Breast epithelium (tissue), 4 donors: ENCODE measurements at regions of chr13 and their contacts with region 1.

Region 1: GRCh38 chr13:23988546-23989122 is 91.3 kb upstream of the C1QTNF9B start:
- DNase-seq: no peak
- H3K4me3 ChIP-seq: no peak overlapping the region
- H3K27ac ChIP-seq: no peak overlapping the region
- H3K4me1 ChIP-seq: peaks cover 0 to 3% of the 10 kb centered on the region in 2 donors
- H3K27me3 ChIP-seq: no peaks in the 10 kb centered on the region
- CTCF ChIP-seq: no peak
- POLR2A ChIP-seq: no peak

Region 2: DNA sequence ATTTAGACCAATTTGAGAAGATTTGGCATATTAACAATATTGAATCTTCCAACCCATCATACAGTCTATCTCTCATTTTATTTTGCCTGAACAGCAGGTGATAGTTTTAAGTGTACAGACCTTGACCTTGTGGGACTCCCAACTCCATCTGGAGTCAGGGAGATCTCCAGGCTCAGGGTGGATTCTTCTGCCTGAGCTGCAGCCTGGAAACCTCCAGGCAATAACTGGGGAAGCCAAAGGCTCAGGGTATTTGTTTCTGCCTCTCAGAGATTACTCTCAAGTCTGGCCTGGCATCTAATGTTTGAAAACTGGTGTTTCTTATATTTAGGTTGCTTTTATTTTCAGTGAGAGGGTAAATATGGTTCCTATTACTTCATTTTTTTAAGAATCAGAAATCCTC is 10.8 kb after region 1 on chr13:
- intact Hi-C with region 1: loop called (anchors 1 kb)
- DNase-seq: no peak
- H3K4me3 ChIP-seq: no peak overlapping the region
- H3K27ac ChIP-seq: no peak overlapping the region
- H3K4me1 ChIP-seq: no peaks in the 10 kb centered on the region
- H3K27me3 ChIP-seq: no peaks in the 10 kb centered on the region
- CTCF ChIP-seq: no peak
- POLR2A ChIP-seq: no peak